OCI-LY7 (cell line): ENCODE measurements at regions of chr6 and their contacts with region 1.

Region 1: DNA sequence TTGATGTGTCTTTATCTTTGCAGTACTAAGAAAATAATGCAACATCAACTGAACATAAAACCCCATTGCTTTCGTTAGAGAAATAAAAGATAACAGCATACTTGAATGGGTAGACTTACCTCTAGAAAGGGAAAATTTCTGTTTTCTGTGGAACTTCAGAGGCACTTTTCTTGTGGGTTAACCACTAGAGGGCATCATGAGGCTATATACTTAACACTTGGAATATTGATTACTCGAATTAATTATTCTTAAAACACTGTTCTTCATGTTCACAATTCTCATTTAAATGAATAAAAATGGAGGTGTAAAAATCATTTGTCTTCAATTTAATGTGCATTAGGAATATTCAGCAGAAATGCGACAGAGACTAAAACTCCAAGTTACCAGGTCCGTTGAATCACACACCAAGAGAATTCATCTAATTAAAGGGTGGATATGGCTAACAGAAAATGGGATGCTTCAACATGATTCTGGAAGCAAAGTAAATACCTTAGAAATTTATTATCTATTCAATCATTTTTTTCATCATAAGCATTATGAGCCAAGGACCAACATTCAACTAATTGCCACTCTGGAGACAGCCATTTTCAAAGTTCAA is 330.8 kb upstream of the PREP start:
- DNase-seq: peak; percentile 73
- H3K4me3 ChIP-seq: no peak overlapping the region
- H3K27ac ChIP-seq: no peak overlapping the region
- H3K4me1 ChIP-seq: peaks cover 3% of the 10 kb centered on the region
- CTCF ChIP-seq: peak; percentile 99

Region 2: GRCh38 chr6:105484238-105485161 is 249.2 kb before region 1 on chr6:
- CTCF ChIA-PET with region 1: no interaction called
- POLR2A ChIA-PET with region 1: no interaction called
- intact Hi-C with region 1: loop called (anchors 2 kb)
- DNase-seq: peak; percentile 50
- H3K4me3 ChIP-seq: no peak overlapping the region
- H3K27ac ChIP-seq: no peak overlapping the region
- H3K4me1 ChIP-seq: peaks cover 5% of the 10 kb centered on the region
- CTCF ChIP-seq: peak; percentile 98